CD8-positive, alpha-beta T cell (primary cell): ENCODE measurements at regions of chr2 and their contacts with region 1.

Region 1: DNA sequence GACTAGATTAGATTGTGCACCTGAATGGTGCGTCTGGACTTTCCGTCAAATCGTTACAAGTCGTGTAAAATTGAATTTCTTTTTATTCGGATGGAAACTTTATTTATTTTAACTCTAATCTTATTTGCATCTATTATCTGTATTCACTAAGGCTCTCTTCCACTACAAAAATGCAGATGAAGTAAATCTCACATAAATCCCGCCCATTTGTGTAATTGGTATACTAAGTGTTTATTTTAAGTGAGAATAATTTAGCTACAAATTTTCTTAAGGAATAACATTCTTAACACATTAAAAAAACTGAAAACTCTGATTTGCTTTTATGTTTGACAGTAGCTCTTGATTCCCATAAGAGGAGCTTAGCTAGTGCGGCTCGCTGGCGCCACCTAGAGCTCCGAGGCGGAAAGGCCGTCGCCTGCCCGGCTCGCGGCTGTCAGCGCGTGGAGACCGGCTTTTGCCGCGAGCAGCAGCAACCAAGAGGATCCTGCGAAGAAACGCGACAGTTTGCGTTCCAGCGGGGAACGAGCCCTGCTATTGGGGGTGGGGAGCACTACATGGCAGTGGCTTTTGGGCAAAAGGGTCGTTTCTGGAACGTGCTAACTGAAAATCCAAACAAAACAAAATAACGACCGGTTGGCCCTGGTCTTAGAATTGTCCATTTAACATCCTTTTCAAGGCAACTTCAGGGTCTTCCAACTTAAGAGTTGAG is 6.7 kb downstream of the SP9 start:
- DNase-seq: peak; percentile 79 to 92 (median 87)
- ATAC-seq: peak; percentile 70
- H3K4me3 ChIP-seq: no peak overlapping the region
- H3K4me3 Mint-ChIP-seq: peak overlapping the region; percentile 69
- H3K27ac ChIP-seq: no peak overlapping the region
- H3K27ac Mint-ChIP-seq: no peak overlapping the region
- H3K4me1 ChIP-seq: peaks cover 49% of the 10 kb centered on the region
- H3K4me1 Mint-ChIP-seq: peaks cover 36% of the 10 kb centered on the region
- H3K27me3 ChIP-seq: peaks cover 63 to 76% of the 10 kb centered on the region in 2 experiments
- H3K27me3 Mint-ChIP-seq: peaks cover 59% of the 10 kb centered on the region
- CTCF ChIP-seq: peak; percentile 98

Region 2: DNA sequence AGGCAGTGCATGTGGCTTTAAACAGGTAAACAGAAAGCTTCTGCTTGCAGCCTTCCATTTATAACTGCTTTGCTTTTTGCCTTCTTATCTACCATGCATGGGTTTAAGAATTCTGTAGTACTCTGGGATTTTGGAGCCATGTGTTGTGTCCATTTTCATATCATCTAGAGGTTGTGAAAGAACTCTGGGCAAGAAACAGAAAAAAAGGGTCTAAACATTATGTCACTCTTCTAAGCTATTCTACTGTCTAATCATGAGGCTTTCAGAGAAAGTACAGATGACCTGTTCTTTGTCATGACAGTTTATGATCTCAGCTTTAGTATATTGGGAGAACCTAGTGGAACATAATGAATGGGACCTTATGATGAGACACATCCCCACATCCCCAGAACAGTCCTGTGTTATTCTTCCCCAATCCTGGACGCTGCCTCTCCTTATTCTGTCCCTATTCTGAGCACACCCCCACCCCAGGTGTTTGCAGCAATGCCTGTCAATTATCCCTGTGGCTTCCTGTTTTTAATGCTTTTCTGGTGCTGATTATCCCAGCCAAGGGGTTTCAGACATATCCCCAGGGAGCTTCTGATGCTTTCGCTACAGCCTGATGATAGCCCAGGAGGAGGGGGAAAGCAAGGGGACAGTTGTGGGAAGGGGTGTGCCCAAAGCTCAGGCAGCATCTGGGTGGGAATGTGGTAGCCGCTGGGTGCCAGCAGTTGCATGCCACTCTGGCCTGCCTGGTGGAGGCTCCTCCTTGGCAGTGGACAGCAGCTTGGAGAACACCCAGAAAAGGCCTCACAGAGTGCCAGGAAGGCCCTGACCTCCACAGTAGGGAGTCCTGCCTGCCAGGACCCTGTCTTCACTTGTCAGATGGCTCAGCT is 1435.3 kb before region 1 on chr2:
- CTCF ChIA-PET with region 1: no interaction called
- POLR2A ChIA-PET with region 1: no interaction called
- intact Hi-C with region 1: no loop called
- DNase-seq: no peak
- ATAC-seq: no peak
- H3K4me3 ChIP-seq: no peak overlapping the region
- H3K4me3 Mint-ChIP-seq: no peak overlapping the region
- H3K27ac ChIP-seq: no peak overlapping the region
- H3K27ac Mint-ChIP-seq: no peak overlapping the region
- H3K4me1 ChIP-seq: no peaks in the 10 kb centered on the region
- H3K4me1 Mint-ChIP-seq: peaks cover 6% of the 10 kb centered on the region
- H3K27me3 ChIP-seq: no peaks in the 10 kb centered on the region
- H3K27me3 Mint-ChIP-seq: no peaks in the 10 kb centered on the region
- CTCF ChIP-seq: no peak

Region 3: GRCh38 chr2:173205375-173205774 is 1136.1 kb before region 1 on chr2:
- CTCF ChIA-PET with region 1: no interaction called
- POLR2A ChIA-PET with region 1: no interaction called
- intact Hi-C with region 1: loop called in 1 of 2 experiments (anchors 5 kb)
- DNase-seq: no peak
- ATAC-seq: no peak
- H3K4me3 ChIP-seq: no peak overlapping the region
- H3K4me3 Mint-ChIP-seq: no peak overlapping the region
- H3K27ac ChIP-seq: no peak overlapping the region
- H3K27ac Mint-ChIP-seq: no peak overlapping the region
- H3K4me1 ChIP-seq: no peaks in the 10 kb centered on the region
- H3K4me1 Mint-ChIP-seq: peaks cover 1% of the 10 kb centered on the region
- H3K27me3 ChIP-seq: no peaks in the 10 kb centered on the region
- H3K27me3 Mint-ChIP-seq: peaks cover 8% of the 10 kb centered on the region
- CTCF ChIP-seq: no peak

Region 4: GRCh38 chr2:173884025-173884802 is 457.2 kb before region 1 on chr2:
- CTCF ChIA-PET with region 1: interaction called, 6 read pairs
- POLR2A ChIA-PET with region 1: no interaction called
- intact Hi-C with region 1: loop called in 1 of 2 experiments (anchors 5 kb)
- DNase-seq: peak in 6 of 9 experiments; percentile 5 to 58 (median 37)
- ATAC-seq: no peak
- H3K4me3 ChIP-seq: no peak overlapping the region
- H3K4me3 Mint-ChIP-seq: no peak overlapping the region
- H3K27ac ChIP-seq: no peak overlapping the region
- H3K27ac Mint-ChIP-seq: no peak overlapping the region
- H3K4me1 ChIP-seq: no peaks in the 10 kb centered on the region
- H3K4me1 Mint-ChIP-seq: peaks cover 2% of the 10 kb centered on the region
- H3K27me3 ChIP-seq: no peaks in the 10 kb centered on the region
- H3K27me3 Mint-ChIP-seq: peaks cover 23% of the 10 kb centered on the region
- CTCF ChIP-seq: peak; percentile 24

Region 5: DNA sequence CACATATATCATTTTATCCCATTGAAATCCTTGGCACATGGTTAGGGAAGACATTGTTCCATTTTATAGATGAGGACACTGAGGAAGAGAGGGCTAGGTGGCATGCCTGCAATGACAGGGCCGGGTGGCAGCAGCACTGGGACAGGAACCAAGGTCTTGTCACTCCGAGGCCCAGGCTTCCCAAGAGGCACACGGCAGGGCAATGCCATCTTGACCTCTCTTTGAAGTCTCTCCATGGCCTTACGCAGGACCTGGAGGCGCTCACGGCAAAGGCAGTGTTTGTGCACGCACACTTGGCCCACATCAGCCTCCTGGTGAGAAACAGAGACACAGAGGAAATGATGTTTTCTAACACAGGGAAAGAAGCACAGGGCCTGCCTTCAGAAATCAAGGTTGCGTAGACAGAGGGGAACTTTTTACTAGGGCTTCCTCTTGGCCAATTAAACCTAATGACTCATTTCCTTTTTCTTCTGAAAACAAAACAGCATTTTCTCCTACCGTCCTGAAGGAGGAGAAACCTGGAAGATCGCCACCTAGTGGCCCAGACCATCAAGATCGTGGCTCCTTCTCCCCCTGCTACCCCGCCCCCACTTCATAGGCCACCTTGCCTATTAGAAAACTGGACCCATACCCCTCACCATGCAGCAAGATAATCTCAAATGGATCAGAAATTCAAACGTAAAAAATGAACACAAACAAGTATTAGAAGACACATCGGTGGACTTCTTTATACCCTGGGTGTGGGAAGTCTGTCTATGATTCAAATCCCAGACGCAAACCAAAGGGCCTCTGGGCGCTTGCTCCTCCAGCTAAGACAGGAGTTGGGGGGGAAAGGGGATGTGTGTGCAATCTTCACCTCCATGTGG is 301.7 kb before region 1 on chr2:
- CTCF ChIA-PET with region 1: no interaction called
- POLR2A ChIA-PET with region 1: no interaction called
- intact Hi-C with region 1: loop called (anchors 10 kb)
- DNase-seq: peak; percentile 54 to 93 (median 85)
- ATAC-seq: peak; percentile 94
- H3K4me3 ChIP-seq: peak overlapping the region; percentile 3 to 43
- H3K4me3 Mint-ChIP-seq: peak overlapping the region; percentile 69
- H3K27ac ChIP-seq: peak overlapping the region; percentile 47 to 84
- H3K27ac Mint-ChIP-seq: peak overlapping the region; percentile 87
- H3K4me1 ChIP-seq: peaks cover 5% of the 10 kb centered on the region
- H3K4me1 Mint-ChIP-seq: peaks cover 8% of the 10 kb centered on the region
- H3K27me3 ChIP-seq: no peaks in the 10 kb centered on the region
- H3K27me3 Mint-ChIP-seq: no peaks in the 10 kb centered on the region
- CTCF ChIP-seq: peak; percentile 67

Region 6: GRCh38 chr2:174326161-174327020 is 15.0 kb before region 1 on chr2:
- CTCF ChIA-PET with region 1: interaction called, 27 read pairs
- POLR2A ChIA-PET with region 1: interaction called, 6 read pairs
- intact Hi-C with region 1: loop called in 1 of 2 experiments (anchors 1 kb)
- DNase-seq: peak in 3 of 9 experiments; percentile 29 to 60 (median 50)
- ATAC-seq: peak; percentile 42
- H3K4me3 ChIP-seq: peak overlapping the region; percentile 33 to 35
- H3K4me3 Mint-ChIP-seq: peak overlapping the region; percentile 76
- H3K27ac ChIP-seq: no peak overlapping the region
- H3K27ac Mint-ChIP-seq: no peak overlapping the region
- H3K4me1 ChIP-seq: peaks cover 24% of the 10 kb centered on the region
- H3K4me1 Mint-ChIP-seq: peaks cover 29% of the 10 kb centered on the region
- H3K27me3 ChIP-seq: peaks cover 59% of the 10 kb centered on the region in 2 experiments
- H3K27me3 Mint-ChIP-seq: peaks cover 76% of the 10 kb centered on the region
- CTCF ChIP-seq: no peak

Region 7: DNA sequence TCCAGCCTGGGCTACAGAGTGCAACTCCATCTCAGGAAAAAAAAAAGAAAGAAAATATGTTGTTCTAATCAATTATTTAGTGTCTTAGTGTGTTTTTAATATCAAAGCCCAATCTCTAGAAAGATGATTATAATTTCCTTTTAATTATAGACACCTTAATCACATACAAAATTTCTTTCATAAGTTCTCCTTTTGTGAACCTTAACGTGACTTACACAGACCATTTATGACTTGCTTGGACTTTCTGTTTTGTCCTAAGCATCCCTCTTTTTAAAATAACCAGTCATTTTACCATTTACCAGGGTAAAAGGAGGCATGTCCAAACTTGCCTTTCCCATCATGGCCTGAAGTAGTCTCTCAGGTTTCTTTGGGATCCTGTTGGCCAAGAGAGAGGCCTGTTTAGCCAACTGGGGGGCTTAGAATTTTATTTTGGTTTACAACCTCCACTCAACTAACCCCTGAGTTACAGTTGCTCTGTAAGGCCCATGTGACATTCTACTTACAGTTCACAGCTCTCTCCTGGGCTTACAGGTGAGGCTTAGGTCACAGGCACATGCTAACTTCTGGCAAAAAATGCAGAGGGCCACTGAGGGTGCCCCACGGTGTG is 169.2 kb after region 1 on chr2:
- CTCF ChIA-PET with region 1: no interaction called
- POLR2A ChIA-PET with region 1: no interaction called
- intact Hi-C with region 1: no loop called
- DNase-seq: no peak
- ATAC-seq: no peak
- H3K4me3 ChIP-seq: no peak overlapping the region
- H3K4me3 Mint-ChIP-seq: no peak overlapping the region
- H3K27ac ChIP-seq: no peak overlapping the region
- H3K27ac Mint-ChIP-seq: no peak overlapping the region
- H3K4me1 ChIP-seq: peaks cover 7% of the 10 kb centered on the region
- H3K4me1 Mint-ChIP-seq: peaks cover 10% of the 10 kb centered on the region
- H3K27me3 ChIP-seq: no peaks in the 10 kb centered on the region
- H3K27me3 Mint-ChIP-seq: no peaks in the 10 kb centered on the region
- CTCF ChIP-seq: no peak